AG04449 (cell line): ENCODE measurements at regions of chr6 and their contacts with region 1.

Region 1: GRCh38 chr6:157667211-157668008 is 155.6 kb upstream of the SNX9 start:
- DNase-seq: peak; percentile 56
- H3K4me3 ChIP-seq: no peak overlapping the region
- CTCF ChIP-seq: peak; percentile 69

Region 2: DNA sequence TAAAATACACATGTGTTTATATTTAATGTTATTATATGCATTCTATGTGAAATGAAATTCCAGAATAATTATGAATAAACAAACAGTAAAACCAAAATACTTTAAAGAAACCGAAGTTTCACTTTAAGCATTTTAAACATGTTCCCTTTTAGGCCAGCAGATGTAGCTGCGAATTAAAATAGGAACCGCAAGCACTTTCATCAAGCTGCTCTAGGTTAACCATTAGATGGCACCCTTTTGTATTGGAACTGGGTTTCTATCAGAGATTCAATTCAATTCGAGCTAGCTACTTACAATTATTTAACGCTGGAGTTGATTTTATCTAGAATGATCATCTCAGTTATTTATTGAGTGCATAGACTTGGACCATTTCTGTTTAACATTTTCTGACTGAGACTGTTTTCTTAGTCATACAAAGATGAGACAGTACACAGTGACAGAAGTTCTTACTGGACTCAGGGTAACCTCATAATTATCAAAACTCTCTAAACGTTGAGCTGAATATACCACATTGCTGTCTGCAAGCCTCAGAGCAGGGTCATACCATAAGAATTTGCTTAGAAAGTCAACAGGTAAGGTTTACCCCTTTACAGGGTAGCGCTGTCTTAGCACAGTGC is 352.6 kb before region 1 on chr6:
- CTCF ChIA-PET with region 1: interaction called, 120 read pairs
- POLR2A ChIA-PET with region 1: no interaction called
- DNase-seq: no peak
- H3K4me3 ChIP-seq: no peak overlapping the region
- CTCF ChIP-seq: peak; percentile 68

Region 3: DNA sequence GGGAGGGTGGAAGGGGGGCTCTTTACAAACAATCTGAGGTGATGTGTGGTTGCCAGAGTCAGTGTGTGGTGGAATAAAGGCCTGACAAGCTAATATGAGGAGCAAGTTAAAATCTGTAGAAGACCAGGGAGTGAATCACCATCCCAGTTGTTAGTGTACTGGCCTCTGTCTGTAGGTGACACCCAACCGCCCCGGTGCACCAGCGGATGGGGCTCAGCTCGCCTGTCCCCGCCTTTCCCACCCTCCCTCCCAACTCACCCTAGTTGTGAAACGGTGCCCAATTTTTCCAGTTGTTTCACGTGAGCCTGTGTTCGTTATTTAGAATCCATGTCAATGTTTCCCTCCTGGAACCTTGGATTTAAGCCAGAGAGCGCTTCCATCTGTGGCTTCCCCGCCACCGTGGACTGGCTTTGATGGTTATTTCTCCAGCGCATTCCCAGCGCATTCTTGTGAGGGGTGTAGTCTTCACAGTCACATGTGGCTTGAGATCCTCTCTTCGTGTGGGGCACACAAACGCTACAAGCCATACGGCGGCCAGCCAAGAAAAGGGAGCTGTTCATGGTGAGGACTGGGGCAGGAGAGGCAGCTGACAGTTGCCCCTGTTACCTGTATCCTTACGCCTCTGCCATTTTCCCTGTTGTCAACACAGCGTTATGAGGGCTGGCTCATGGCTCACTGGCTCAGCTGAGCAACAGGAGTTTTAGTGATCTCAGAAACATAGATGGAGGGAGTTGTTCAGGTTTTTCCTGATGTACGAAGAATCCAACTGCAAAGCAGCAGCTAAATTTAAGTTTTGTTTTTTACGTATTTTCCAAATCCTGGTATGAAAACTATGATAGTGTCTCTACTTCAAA is 148.8 kb before region 1 on chr6:
- CTCF ChIA-PET with region 1: no interaction called
- POLR2A ChIA-PET with region 1: no interaction called
- DNase-seq: peak; percentile 16
- H3K4me3 ChIP-seq: no peak overlapping the region; the same call in 1 of the 2 replicates
- CTCF ChIP-seq: no peak

Region 4: DNA sequence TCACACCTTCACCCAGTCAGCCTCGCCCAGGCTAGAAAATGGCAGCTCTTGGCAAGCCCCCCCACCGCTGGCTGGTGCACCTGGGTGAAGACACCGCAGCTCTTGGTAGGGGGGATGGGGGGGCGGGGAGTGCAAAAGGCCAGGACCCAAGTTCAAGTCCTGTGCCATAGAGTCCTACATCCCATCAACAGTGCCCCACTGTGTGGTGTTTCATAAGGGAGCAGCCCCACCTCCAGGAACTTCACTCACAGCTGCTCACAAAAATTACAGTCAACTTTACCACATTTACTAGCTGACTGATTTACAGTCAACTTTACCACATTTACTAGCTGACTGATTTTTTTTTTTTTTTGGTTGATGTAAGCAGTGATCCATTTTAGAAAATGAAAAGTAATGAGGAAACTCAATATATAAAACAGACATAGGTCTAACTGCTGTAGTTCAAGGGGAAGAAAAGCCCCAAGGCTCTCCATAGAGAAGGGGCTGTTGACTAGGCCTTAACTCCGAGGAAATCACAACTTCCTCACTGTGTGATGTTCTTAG is 53.3 kb before region 1 on chr6:
- CTCF ChIA-PET with region 1: interaction called, 10 read pairs
- POLR2A ChIA-PET with region 1: no interaction called
- DNase-seq: no peak
- H3K4me3 ChIP-seq: no peak overlapping the region
- CTCF ChIP-seq: no peak

Region 5: GRCh38 chr6:157656437-157656997 is 10.9 kb before region 1 on chr6:
- CTCF ChIA-PET with region 1: interaction called, 96 read pairs
- POLR2A ChIA-PET with region 1: interaction called, 4 read pairs
- DNase-seq: no peak
- H3K4me3 ChIP-seq: no peak overlapping the region
- CTCF ChIP-seq: no peak

Region 6: DNA sequence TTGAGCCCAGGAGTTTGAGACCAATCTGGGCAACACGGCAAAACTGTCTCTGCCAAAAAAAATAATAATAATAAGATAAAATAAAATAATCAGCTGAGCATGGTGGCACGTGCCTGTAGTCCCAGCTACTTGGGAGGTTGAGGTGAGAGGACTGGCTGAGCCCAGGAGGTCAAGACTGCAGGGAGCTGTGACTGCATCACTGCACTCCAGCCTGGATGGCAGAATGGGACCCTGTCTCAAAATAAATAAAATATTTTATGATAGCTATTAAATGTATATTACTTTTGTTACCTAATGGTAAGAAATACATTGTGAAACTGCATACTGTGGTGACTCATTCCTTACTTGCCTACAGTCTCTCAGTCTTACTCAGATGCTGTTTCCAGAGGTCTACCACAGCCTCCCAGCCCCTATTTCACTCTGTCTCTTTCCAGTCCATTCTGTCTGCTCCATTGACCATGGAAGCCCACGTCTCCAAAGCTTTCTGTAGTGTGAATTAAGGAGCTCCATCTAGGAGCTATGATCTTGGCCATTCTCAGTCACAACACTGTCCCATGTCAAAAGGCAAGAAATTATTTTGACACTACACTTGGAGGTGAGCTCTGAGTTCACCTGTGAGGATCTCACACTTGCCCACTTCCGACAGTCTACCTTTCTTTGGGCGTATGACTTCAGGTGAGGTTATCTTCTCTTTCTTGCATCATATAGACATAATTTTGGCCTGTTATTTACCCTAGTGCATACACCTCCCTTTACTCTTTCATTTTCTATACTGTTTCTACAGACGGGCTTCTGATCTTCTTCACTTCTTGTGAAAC is 133.2 kb after region 1 on chr6:
- CTCF ChIA-PET with region 1: no interaction called
- POLR2A ChIA-PET with region 1: no interaction called
- DNase-seq: peak; percentile 44
- H3K4me3 ChIP-seq: no peak overlapping the region
- CTCF ChIP-seq: no peak

Region 7: DNA sequence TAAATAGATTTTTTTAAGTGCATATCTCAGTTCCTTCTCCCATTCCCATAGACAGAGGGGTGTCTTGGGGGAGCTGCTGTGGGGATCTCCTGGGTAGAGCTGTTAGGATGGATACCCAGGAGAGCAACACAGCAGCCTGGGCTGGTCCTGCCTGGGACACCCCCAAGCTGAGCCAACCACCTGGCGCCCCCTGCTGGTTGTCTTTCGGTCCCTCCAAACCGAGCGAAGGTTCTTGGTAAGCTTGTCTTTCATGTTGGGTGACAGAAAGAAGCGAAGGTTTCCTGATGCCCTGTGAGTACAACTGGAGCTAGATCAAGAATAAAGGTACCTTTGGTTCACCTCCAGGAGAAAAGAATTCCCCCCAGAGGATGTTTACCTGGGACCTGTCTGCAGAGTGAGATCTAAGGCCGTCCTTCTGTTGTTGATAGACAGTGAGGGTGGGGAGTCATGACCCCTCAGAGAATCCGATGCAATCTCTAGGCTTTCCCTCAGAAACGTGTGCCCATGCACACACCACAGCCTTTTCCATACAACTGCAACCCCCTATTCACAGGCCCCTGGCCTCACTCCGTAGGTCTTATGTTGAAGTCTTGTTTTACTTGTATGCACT is 206.4 kb after region 1 on chr6:
- CTCF ChIA-PET with region 1: interaction called, 27 read pairs
- POLR2A ChIA-PET with region 1: interaction called, 3 read pairs
- DNase-seq: no peak
- H3K4me3 ChIP-seq: no peak overlapping the region
- CTCF ChIP-seq: peak; percentile 88